Activated CD8-positive, alpha-beta T cell treated with anti-CD3 and anti-CD28 coated beads for 36 hours (primary cell): ENCODE measurements at regions of chr13 and their contacts with region 1.

Region 1: DNA sequence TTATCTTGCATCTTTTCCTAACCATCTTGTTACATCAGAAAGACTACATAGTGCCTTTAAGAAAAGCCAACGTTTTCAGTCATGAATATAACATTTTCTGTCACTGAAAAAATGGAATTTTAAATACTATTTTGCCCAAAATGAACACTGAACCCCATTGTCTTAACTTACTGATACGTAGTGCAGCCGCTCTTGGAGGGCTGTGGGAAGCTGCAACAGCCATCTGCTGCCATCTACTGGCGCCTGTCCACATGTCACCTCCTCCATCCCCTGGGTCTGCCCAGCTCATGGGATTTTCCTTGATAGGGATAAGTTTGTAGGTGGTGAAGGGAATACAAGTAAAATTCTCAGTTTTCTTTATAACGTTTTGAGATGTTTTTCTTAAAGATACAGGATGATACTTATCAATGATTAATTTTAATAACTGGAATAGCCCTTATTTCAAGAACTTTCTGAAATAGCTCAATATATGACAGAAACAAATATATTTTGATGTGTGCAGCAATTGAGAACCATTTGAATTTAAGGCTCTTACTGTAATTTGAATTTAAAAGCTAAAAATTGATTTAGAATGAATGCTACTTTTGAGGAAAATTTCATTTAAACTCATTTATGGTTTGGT is 73.7 kb downstream of the GGACT start:
- DNase-seq: peak; percentile 83
- ATAC-seq: peak; percentile 84
- H3K4me3 Mint-ChIP-seq: no peak overlapping the region
- H3K27ac Mint-ChIP-seq: no peak overlapping the region
- H3K4me1 Mint-ChIP-seq: peaks cover 10% of the 10 kb centered on the region
- H3K27me3 Mint-ChIP-seq: no peaks in the 10 kb centered on the region
- CTCF ChIP-seq: peak; percentile 99

Region 2: DNA sequence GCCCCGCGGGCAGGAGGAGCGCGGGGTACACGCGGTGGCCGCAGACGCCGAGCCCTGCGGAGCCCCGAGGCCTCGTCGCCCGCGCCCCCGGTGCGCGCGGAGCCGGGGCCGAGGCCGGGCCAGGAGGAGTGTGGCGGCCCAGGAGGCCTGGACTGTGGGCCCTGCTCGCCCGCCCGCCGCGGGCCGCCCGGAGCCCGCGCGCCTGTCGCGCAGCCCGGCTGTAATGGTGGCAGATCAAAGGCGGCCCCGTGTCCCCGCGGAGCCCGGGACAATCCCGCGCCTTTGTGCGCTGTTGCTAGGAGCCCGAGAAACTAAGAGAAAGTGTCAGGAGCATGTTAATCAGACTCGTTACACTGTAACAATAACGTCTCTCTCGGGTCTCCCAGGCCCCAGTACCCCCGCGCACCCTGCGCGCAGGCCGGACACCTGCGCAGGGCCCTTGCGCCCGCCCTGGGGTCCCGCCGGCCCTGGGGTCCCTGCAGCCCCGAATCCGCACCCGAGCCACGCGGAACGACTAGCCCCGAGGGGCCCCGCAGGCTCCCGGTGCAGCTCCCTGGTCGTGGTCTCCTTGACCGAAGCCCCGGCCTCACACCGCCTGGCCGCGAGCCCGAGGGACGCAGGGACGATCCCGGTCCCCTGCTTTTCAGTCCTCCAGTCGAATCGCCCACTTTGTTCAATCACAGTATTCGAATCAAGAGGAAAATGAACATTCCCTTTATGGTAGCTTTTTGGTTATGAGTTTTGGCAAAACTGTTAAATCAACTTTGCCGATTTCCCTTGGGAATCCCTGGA is 618.7 kb before region 1 on chr13:
- CTCF ChIA-PET with region 1: interaction called, 13 read pairs
- POLR2A ChIA-PET with region 1: no interaction called
- intact Hi-C with region 1: no loop called
- DNase-seq: no peak
- ATAC-seq: no peak
- H3K4me3 Mint-ChIP-seq: peak overlapping the region; percentile 61
- H3K27ac Mint-ChIP-seq: no peak overlapping the region
- H3K4me1 Mint-ChIP-seq: peaks cover 8% of the 10 kb centered on the region
- H3K27me3 Mint-ChIP-seq: peaks cover 55% of the 10 kb centered on the region
- CTCF ChIP-seq: no peak

Region 3: GRCh38 chr13:99916366-99917103 is 598.4 kb before region 1 on chr13:
- CTCF ChIA-PET with region 1: interaction called, 16 read pairs
- POLR2A ChIA-PET with region 1: no interaction called
- intact Hi-C with region 1: loop called (anchors 10 kb)
- DNase-seq: peak; percentile 16
- ATAC-seq: peak; percentile 78
- H3K4me3 Mint-ChIP-seq: no peak overlapping the region
- H3K27ac Mint-ChIP-seq: no peak overlapping the region
- H3K4me1 Mint-ChIP-seq: peaks cover 12% of the 10 kb centered on the region
- H3K27me3 Mint-ChIP-seq: peaks cover 18% of the 10 kb centered on the region
- CTCF ChIP-seq: peak; percentile 94

Region 4: DNA sequence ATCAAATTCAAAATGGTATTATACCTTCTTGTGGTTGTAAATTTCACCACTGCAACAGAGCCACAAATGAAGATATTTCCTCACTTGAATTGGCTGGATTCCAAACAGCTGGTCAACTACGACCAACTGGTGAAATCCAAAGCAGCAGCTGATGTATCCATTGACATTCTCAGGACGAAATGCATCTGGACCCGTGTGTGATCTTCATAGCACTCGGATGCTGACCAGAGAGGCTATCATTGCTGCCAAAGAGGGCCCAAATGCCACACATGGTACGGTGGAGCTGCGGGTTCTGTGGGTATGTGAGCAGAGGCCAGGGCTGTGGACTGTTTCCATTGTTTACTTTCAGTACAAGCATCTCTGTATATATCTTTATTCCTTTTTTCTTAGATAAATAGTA is 451.6 kb before region 1 on chr13:
- CTCF ChIA-PET with region 1: no interaction called
- POLR2A ChIA-PET with region 1: no interaction called
- intact Hi-C with region 1: no loop called
- DNase-seq: no peak
- ATAC-seq: no peak
- H3K4me3 Mint-ChIP-seq: no peak overlapping the region
- H3K27ac Mint-ChIP-seq: no peak overlapping the region
- H3K4me1 Mint-ChIP-seq: no peaks in the 10 kb centered on the region
- H3K27me3 Mint-ChIP-seq: peaks cover 9% of the 10 kb centered on the region
- CTCF ChIP-seq: no peak

Region 5: DNA sequence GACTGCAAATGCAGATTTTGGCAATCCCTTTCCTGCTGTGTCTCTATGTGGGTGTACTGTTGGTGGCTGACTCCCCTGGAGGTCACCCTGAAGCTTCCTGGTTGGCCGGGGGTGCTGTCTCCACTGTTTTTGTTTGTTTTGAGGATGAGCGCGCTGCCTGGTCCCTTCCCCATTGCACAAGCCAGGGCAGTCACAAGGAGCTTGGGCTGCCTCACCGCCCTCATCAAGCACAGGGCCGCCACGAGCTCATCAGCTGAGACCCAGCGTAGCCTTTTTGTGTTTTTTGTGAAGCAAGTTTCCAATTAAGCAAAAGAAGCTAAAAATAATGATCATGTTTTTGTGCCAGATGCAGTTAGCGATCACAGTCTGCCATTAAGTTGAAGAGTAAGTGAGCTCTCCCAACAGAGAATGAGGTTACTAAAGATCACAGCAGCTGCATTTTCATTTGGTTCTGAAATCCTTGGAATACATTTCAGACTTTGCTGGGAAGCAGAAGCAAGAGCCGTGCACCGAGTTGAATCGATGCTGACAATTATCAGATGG is 15.8 kb after region 1 on chr13:
- CTCF ChIA-PET with region 1: interaction called, 15 read pairs
- POLR2A ChIA-PET with region 1: no interaction called
- intact Hi-C with region 1: no loop called
- DNase-seq: no peak
- ATAC-seq: no peak
- H3K4me3 Mint-ChIP-seq: no peak overlapping the region
- H3K27ac Mint-ChIP-seq: no peak overlapping the region
- H3K4me1 Mint-ChIP-seq: no peaks in the 10 kb centered on the region
- H3K27me3 Mint-ChIP-seq: no peaks in the 10 kb centered on the region
- CTCF ChIP-seq: no peak